Right cardiac atrium (tissue), 5 donors: ENCODE measurements at regions of chr22 and their contacts with region 1.

Region 1: DNA sequence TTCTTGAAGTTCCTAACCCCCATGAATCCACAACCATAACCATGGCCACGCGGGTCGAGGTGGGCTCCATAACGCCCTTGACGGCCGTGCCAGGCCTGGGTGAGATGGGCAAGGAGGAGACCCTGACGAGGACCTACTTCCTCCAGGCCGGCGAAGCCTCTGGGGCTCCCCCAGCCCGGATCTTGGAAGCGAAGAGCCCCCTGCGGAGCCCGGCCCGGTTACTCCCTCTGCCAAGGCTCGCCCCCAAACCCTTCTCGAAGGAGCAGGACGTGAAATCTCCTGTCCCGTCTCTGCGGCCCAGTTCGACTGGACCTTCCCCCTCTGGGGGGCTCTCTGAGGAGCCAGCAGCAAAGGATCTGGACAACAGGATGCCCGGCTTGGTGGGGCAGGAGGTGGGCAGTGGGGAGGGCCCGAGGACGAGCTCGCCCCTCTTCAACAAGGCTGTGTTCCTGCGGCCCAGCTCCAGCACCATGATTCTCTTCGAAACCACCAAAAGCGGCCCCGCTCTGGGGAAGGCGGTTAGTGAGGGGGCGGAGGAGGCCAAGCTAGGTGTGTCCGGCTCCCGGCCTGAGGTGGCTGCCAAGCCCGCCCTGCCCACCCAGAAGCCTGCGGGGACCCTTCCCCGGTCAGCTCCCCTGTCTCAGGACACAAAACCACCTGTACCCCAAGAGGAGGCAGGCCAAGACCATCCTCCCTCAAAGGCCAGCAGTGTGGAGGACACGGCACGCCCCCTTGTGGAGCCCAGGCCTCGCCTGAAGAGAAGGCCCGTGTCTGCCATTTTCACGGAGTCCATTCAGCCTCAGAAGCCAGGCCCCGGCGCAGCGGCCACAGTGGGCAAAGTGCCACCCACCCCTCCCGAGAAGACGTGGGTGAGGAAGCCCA is 75.7 kb downstream of the KIAA1671 start:
- DNase-seq: peak; percentile 57 to 83 (median 81)
- ATAC-seq: peak; percentile 36 to 40
- H3K4me3 ChIP-seq: no peak overlapping the region
- H3K27ac ChIP-seq: no peak overlapping the region
- H3K4me1 ChIP-seq: peaks cover 9% of the 10 kb centered on the region
- H3K27me3 ChIP-seq: no peaks in the 10 kb centered on the region

Region 2: GRCh38 chr22:24951942-24952836 is 76.0 kb before region 1 on chr22 and contains the start of gene KIAA1671:
- intact Hi-C with region 1: loop called in 2 of 4 experiments (anchors 5 kb)
- DNase-seq: peak; percentile 89 to 96 (median 95)
- ATAC-seq: peak; percentile 95 to 97
- H3K4me3 ChIP-seq: peak within 1 kb of the TSS; percentile 61
- H3K27ac ChIP-seq: peak within 1 kb of the TSS; percentile 52
- H3K4me1 ChIP-seq: no peaks in the 10 kb centered on the region
- H3K27me3 ChIP-seq: no peaks in the 10 kb centered on the region
- total RNA-seq, gene KIAA1671: 17.3 to 24.0 (median 20.3) TPM

Region 3: GRCh38 chr22:25219948-25220442 is 191.8 kb after region 1 on chr22:
- intact Hi-C with region 1: no loop called
- DNase-seq: no peak
- ATAC-seq: peak in 1 of 2 donors; percentile 26
- H3K4me3 ChIP-seq: no peak overlapping the region
- H3K27ac ChIP-seq: no peak overlapping the region
- H3K4me1 ChIP-seq: no peaks in the 10 kb centered on the region
- H3K27me3 ChIP-seq: no peaks in the 10 kb centered on the region